Mucosa of descending colon (tissue), 3 donors: ENCODE measurements at regions of chr4 and their contacts with region 1.

Region 1: DNA sequence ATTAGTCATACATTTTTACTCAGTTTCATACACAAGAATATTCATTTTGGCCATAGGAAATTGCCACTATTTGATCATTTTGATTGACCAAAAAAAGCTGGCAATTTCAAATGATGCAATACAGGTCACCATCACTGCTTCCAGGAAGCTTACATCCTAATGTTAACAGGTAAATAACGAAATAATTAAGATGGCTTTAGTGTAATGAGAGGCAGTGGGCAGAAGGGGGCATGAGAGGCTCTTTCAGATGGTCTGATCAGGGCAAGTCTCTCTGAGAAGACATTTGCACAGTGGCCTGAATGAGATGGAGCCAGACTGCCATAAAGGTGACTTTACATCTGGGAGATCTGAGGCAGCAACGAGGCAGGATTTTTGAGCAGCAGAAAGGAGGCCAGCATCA is 170.7 kb downstream of the SLIT2 start:
- DNase-seq: peak in 2 of 3 donors; percentile 23 to 67
- ATAC-seq: peak; percentile 86
- H3K4me3 ChIP-seq: no peak overlapping the region
- H3K4me1 ChIP-seq: no peaks in the 10 kb centered on the region
- CTCF ChIP-seq: peak; percentile 32

Region 2: DNA sequence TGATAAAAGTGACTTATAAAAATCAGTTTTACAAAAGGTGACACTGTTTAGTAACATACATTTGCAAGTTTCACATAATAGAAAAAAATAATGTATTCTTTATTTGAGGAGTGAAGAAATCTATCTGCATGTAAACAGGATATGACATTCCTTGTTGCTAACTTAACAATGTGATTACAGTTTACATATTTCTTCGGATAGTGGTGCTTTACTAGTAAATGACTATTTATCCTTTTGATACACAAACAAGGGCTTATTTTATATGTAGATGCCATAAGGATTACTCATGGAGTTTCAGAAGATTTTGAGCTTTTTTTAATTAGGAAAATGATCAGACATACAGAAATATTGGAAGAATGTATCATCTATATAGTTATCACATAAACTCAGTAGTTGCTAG is 44.2 kb before region 1 on chr4:
- intact Hi-C with region 1: no loop called
- DNase-seq: no peak
- ATAC-seq: no peak
- H3K4me3 ChIP-seq: no peak overlapping the region
- H3K4me1 ChIP-seq: no peaks in the 10 kb centered on the region
- CTCF ChIP-seq: no peak

Region 3: DNA sequence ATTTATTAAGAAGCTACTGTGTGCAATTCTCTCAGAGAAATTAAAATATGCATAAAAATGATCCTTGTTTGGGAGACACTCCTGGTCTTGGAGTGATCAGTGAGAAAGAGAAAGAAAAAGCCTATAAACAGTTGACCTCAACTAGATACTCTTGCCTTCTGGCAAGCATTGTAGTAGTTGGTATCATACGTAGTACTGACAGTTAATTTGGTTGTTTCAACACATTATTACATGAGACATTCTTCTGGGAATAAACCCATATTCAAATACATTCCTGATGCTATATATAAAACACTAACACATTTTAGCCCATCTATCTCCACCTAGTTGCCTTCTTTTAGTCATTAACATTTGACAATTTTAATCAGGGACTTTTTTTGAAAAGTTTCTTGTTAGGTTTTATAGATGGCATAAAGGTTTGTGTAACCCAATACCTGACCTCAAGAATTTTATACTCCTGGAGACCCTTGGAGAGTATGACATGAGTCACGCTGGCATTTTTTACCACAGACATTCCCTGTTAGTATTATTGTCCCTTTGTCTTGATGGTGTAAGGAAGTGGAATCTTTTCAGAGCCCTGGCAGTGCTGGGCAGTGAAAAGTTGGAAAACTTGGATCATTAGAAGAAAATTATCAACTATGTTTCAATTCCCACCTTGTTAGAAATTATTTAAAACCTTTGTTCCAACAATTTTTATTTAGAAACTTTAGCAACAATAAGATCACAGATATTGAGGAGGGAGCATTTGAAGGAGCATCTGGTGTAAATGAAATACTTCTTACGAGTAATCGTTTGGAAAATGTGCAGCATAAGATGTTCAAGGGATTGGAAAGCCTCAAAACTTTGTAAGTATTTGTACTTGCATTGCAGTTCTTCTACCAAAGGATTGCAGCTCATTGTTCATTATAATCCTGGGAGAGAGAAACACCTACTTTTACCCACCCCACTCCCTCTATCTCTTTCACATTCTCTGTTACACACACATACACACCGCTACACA is 110.8 kb after region 1 on chr4:
- intact Hi-C with region 1: loop called in 1 of 2 experiments (anchors 10 kb)
- DNase-seq: no peak
- ATAC-seq: no peak
- H3K4me3 ChIP-seq: no peak overlapping the region
- H3K4me1 ChIP-seq: no peaks in the 10 kb centered on the region
- CTCF ChIP-seq: no peak

Region 4: DNA sequence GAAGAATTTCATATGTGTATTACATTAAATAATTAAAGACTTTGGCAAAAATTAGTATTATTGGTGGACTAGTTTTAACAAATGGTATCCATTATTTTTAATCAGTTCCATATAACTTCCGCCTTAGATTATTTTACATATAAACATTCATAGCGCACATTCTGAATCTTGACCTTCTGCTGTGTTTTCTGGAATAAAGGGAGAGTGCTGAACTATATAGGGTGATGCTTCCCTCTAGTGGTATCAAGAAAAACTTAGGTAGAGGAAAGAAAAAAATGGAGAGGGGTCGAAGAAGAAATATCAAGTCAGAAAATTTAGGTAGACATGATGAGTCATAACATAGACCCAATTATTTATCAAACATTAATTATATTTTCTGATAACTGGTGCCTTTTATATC is 122.2 kb after region 1 on chr4:
- intact Hi-C with region 1: loop called (anchors 10 kb)
- DNase-seq: no peak
- ATAC-seq: peak; percentile 34
- H3K4me3 ChIP-seq: no peak overlapping the region
- H3K4me1 ChIP-seq: no peaks in the 10 kb centered on the region
- CTCF ChIP-seq: no peak

Region 5: DNA sequence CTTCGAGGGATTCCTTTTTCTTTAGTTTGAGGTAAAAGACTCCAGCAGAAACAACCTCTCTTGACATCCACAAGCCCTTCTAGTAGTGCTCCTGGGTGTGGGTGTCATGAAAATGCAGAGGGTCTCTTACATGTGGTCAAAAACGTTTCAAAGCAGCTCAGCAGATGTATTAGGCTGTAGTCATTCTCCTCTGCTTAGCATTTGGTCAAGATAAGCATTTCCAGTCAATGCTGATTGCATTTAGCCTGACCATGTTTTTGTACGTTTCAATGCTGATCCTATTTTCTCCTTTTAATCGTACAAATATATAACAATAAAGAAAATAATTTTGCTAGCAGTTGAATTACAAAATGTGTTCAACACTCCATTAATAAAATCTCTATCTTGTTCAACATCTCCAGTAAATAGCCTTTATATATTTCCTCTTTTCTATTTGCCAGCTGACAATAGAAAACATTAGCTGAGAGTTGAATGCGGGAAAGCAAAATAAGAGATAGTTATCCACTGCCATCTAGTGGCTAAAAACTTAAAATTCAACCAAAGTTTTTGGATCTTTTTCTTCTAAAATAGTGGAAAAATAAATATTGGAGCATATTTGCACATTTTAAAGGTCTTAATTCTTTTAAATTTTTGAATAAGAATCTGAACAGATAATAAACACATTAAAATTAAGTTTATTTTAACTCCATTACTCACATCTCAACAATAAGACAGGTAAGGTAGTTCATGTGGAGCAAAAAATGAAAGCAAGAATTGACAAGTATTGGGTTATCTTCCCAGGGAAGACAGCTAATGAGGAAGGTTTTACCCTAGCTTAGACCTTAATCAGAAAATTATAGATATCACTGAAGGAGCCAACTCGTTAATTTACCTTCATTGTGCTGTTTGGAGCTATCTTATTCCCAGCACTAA is 262.7 kb after region 1 on chr4:
- intact Hi-C with region 1: loop called in 1 of 2 experiments (anchors 5 kb)
- DNase-seq: no peak
- ATAC-seq: no peak
- H3K4me3 ChIP-seq: no peak overlapping the region
- H3K4me1 ChIP-seq: no peaks in the 10 kb centered on the region
- CTCF ChIP-seq: peak; percentile 44